Left colon (tissue), 2 donors: ENCODE measurements at regions of chr2 and their contacts with region 1.

Region 1: DNA sequence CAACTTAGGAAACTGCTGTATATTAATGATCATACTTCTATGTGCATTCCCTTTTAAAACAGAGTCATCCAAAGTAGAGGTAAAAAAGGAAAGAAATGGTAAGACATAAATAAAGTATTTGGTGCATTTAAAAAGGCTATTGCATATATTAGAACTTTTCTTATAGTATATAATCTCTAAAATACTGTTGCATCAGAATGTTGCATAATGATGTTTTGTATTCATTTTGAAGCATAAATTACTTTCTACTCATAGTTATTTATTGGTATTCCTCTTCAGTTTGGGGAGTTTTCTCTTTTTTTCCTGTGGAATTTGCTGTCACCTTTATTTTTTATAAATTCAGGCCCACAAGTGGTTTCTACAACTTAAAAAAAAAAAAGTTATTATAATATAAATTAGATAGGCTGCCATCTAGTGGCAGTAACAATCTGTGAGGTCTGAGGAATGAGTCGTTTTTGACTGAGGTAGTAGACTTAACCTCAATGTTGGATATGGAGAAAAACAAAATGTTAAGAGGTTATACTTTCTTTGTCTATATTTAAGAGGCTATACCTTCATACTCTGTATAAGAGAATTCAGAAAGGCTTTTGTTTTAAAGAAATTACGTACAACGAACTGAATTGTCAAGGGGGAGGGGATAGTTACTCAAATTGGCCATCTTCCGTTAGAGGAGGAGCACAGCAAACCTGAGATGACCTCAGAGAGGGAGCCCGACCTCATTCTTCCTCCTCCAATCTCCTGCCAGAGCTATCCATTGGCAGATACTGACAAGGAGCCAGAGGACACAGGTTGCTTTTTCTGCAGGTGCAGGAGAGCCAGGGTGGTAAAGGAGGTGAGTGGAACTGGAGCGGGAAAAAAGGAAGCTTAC is 23.8 kb downstream of the ANKAR start:
- DNase-seq: peak; percentile 30 to 38
- ATAC-seq: peak; percentile 89

Region 2: DNA sequence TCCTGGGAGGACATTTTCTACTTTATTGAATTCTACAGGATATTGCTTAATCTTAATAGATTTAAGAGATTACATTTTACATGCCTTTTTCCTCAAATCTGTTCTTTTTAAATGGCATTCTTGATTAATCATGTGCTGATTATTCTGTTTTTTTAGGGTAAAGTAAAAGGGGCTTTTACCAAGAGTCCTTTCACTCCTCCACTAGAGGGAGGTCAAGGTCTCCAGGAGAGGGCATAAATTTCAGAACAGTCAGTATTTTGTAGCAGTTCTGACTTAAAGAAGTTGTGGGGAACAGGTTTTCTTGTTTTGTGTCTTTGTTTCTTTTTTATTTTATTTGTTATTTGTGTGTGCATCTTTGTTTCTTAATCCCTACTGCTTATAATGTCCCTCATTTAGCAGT is 231.6 kb before region 1 on chr2:
- intact Hi-C with region 1: no loop called
- DNase-seq: no peak
- ATAC-seq: peak; percentile 63

Region 3: DNA sequence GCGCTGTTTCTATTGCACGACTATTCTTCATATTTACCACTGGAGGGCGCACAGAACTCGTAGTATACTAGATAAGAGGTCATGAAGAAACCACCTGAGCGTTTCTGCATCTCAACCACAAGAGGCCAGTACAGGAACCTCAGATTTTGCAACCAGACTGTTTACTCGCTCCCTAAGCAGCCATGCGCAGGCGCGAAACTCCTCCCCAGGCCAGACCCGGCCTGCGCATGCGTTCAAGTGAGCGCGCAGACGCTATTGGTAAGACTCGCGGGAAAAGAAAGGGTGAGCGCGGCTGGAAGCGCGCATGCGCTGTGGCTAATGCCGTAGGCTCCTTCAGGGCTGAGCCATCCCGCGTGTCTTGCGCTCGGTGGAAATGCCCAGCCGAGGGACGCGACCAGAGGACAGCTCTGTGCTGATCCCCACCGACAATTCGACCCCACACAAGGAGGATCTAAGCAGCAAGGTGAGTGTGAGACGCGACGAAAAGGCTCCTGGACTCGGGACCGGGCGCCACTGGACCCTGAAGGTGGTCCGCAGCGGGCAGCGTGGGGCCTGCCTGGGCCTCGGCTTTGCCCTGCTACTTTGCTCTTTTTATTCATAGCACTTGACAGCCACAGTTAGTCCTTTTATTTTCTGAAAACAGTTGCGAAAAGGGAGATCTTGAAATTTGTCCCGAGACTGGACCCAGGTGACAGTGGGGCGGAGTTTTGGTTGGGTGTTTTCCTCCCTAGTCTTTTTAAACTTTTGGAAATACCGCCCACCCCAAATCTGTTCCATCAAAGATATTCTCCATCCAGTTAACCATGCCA is 36.9 kb before region 1 on chr2 and contains the start of gene ASNSD1:
- intact Hi-C with region 1: loop called in 1 of 2 experiments (anchors 5 kb)
- DNase-seq: peak; percentile 99
- ATAC-seq: peak; percentile 93
- total RNA-seq, gene ASNSD1: 18.5 to 19.2 TPM